Esophagus squamous epithelium (tissue), 5 donors: ENCODE measurements at regions of chr2 and their contacts with region 1.

Region 1: DNA sequence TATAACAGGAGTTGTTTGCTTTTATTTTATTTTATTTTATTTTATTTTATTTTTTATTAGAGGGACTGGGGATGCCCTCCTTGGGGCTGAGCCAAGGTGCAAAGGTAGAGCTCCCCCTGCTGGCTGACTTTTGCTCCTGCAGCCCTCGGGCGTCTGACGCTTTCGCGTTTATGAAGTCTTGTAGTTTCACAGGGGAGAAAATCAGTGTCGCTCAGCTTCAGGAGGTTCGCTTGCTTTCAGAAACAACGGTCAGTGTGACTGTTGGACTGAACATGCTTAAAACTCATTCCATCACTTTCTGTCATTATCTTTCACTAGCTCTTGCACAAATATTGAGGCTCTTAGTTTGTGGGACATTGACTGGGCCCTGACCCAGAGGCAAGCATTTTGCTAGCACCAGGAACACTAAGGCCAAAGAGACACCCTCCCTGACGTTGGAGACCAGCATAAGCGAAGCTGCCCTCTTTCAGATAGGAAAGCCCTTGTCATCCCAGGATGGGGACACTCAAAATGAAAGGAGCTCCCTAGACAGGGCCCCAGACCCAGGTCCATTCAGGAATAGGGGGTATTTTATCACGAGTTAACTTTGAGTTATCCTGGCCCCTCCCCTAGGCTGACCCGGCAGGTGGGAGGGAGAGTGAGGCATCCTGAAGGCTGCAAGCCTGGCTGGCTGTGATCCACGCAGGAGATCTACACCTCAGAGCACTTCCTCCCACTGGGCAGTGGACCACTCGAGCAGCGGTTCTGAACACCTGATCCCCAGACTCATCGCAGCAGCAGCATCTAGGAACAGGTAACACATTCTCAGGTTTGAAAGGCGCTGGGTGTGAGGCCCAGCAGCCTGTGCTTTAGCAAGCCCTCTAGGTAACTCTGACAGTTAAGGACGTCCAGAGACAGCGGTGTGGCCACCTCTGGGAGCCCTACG is 34.4 kb downstream of the LGALSL start:
- DNase-seq: no peak
- H3K4me3 ChIP-seq: no peak overlapping the region
- H3K27ac ChIP-seq: no peak overlapping the region
- H3K4me1 ChIP-seq: peaks cover 5 to 42% (median 17%) of the 10 kb centered on the region in 3 donors
- H3K27me3 ChIP-seq: no peaks in the 10 kb centered on the region
- CTCF ChIP-seq: peak; percentile 88 to 98 (median 96)
- POLR2A ChIP-seq: no peak

Region 2: GRCh38 chr2:64040161-64040560 is 448.2 kb before region 1 on chr2:
- intact Hi-C with region 1: loop called (anchors 10 kb)
- DNase-seq: no peak
- H3K4me3 ChIP-seq: no peak overlapping the region
- H3K27ac ChIP-seq: no peak overlapping the region
- H3K4me1 ChIP-seq: no peaks in the 10 kb centered on the region
- H3K27me3 ChIP-seq: no peaks in the 10 kb centered on the region
- CTCF ChIP-seq: no peak
- POLR2A ChIP-seq: no peak

Region 3: GRCh38 chr2:64157792-64158191 is 330.5 kb before region 1 on chr2:
- intact Hi-C with region 1: no loop called
- DNase-seq: no peak
- H3K4me3 ChIP-seq: no peak overlapping the region
- H3K27ac ChIP-seq: no peak overlapping the region
- H3K4me1 ChIP-seq: peaks cover 0 to 8% (median 3%) of the 10 kb centered on the region in 3 donors
- H3K27me3 ChIP-seq: no peaks in the 10 kb centered on the region
- CTCF ChIP-seq: no peak
- POLR2A ChIP-seq: no peak

Region 4: DNA sequence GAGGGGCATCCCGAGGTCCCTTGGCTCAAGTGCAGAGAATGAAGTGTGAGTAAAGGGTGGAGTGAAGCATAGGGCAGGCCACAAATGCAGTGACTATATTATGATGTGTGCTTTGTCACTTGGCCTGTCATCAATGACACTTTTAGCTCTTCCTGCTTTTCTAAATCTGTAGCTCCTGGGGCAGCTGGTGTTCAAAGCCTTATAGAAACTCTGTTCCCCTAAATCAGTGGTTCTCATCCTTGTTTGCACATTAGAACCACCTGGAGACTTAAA is 169.9 kb before region 1 on chr2:
- intact Hi-C with region 1: no loop called
- DNase-seq: no peak
- H3K4me3 ChIP-seq: no peak overlapping the region
- H3K27ac ChIP-seq: no peak overlapping the region
- H3K4me1 ChIP-seq: peaks cover 0 to 4% (median 0%) of the 10 kb centered on the region in 3 donors
- H3K27me3 ChIP-seq: no peaks in the 10 kb centered on the region
- CTCF ChIP-seq: no peak
- POLR2A ChIP-seq: no peak

Region 5: DNA sequence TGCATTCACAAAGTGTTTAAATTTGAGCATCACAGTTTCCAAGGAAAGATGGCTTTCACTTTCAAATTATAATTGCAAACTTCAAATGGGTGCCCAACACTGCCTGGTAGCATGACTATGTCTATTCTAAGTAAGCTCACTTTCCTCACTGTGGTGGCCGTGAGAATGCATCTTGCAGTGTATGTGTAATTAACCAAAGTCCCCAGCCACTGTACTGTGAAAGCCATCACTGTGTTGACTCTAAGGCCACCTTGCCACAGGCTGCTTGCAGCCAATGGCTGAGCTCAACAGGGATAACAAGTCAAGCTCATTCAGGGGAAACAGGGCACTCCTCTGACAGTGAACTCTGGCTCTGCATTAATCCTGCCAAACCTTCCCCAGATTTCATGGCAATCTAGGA is 77.6 kb before region 1 on chr2:
- intact Hi-C with region 1: no loop called
- DNase-seq: no peak
- H3K4me3 ChIP-seq: no peak overlapping the region
- H3K27ac ChIP-seq: no peak overlapping the region
- H3K4me1 ChIP-seq: peaks cover 5 to 13% (median 8%) of the 10 kb centered on the region in 3 donors
- H3K27me3 ChIP-seq: no peaks in the 10 kb centered on the region
- CTCF ChIP-seq: no peak
- POLR2A ChIP-seq: no peak